ENCODE measurements at regions of chr4 and their contacts with region 1.

Region 1: GRCh38 chr4:127965062-127965802 is at the starts of genes ABHD18 and MFSD8:
- DNase-seq: peak; percentile 99
- H3K4me3 Mint-ChIP-seq: peak within 1 kb of the TSS; percentile 97
- H3K27ac Mint-ChIP-seq: peak within 1 kb of the TSS; percentile 94
- H3K4me1 Mint-ChIP-seq: peaks cover 5% of the 10 kb centered on the region
- H3K27me3 Mint-ChIP-seq: no peaks in the 10 kb centered on the region
- CTCF ChIP-seq: peak; percentile 51
- total RNA-seq, gene ABHD18: 10.7 and 12.1 TPM in 2 replicates
- total RNA-seq, gene MFSD8: 17.7 and 24.1 TPM in 2 replicates

Region 2: DNA sequence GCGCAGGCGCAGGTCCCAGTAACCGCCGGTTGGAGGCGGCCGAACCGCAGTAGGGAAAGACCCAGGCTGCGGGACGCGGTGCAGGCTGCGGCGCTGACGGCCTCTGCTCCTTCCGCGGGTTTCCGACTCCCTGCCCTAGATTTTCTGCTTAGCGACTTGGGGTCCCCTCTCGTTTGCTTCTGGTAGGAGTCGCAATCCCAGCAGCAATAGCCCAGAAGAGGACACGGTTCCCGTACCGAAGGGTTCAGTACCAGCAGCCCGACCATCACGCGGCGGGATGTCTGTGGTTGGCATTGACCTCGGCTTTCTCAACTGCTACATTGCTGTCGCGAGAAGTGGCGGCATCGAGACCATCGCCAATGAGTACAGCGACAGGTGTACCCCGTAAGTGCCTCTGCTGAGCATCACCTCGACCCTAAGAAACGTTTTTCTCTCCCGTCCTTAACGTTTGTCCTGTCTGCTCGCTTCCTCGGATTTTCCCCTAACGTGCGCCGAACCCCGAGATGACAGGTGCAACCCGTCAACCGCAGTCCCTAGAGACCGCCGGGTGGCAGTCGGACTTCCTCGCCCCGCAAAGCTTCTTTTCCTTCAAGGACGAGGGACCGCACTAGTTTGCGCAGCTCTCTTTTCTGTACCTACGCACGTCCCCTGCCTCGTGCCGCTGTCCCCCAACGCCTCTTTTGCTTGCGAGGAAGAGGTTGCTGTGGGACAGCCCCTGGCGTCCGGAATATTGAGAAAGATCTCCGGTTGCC is 182.8 kb before region 1 on chr4 and contains the start of gene HSPA4L:
- CTCF ChIA-PET with region 1: no interaction called
- POLR2A ChIA-PET with region 1: interaction called, 40 read pairs
- intact Hi-C with region 1: loop called (anchors 2 kb)
- DNase-seq: peak; percentile 78
- H3K4me3 Mint-ChIP-seq: peak within 1 kb of the TSS; percentile 82
- H3K27ac Mint-ChIP-seq: peak within 1 kb of the TSS; percentile 96
- H3K4me1 Mint-ChIP-seq: peaks cover 7% of the 10 kb centered on the region
- H3K27me3 Mint-ChIP-seq: no peaks in the 10 kb centered on the region
- CTCF ChIP-seq: peak; percentile 10
- total RNA-seq, gene HSPA4L: 45.9 and 68.9 TPM in 2 replicates

Region 3: DNA sequence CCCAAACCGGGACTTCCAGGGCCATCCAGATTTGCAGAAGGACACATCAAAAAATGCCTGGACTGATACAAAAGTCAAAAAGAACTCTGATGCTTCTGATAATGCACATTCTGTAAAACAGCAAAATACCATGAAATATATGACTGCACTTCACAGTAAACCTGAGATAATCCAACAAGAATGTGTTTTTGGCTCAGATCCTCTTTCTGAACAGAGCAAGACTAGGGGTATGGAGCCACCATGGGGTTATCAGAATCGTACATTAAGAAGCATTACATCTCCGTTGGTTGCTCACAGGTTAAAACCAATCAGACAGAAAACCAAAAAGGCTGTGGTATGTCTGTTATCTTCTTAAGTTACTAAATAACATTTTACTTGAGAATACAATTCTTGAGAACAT is 75.3 kb before region 1 on chr4:
- CTCF ChIA-PET with region 1: interaction called, 9 read pairs
- POLR2A ChIA-PET with region 1: interaction called, 75 read pairs
- intact Hi-C with region 1: no loop called
- DNase-seq: no peak
- H3K4me3 Mint-ChIP-seq: no peak overlapping the region
- H3K27ac Mint-ChIP-seq: peak overlapping the region; percentile 35
- H3K4me1 Mint-ChIP-seq: peaks cover 21% of the 10 kb centered on the region
- H3K27me3 Mint-ChIP-seq: no peaks in the 10 kb centered on the region
- CTCF ChIP-seq: no peak

Region 4: DNA sequence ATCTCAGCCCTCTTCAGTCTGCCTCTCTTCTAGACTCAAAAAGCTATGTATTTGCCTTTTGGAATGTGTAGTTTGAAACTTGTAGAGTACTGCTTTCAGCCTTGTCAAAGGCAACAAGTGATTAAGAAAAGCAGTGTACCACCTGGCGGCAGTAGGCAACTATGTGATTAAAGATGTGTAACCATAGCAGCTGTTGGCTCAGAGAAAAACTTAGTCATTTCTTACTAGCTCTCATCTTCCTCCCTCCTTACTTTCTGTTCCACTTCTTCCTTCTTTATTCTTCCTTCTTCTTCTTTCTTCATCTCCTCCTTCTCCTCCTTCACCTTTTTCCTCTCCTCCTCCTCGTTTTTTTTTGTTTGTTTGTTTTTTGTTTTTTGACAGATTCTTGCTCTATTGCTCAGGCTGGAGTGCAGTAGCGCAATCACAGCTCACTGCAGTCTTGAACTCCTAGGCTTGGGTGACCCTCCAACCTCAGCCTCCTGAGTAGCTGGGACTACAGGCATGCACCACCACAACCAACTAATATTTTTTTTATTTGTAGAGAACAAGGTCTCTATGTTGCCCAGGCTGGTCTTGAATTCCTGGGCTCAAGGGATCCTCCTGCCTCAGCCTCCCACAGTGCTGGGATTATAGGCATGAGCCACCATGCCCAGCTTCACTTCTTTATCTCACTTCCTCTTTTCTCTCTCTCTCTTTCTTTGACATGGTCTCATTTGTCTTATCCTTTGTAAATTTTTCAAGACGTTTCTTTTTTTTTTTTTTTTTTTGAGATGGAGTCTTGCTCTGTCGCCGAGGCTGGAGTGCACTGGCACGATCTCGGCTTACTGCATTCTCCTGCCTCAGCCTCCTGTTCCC is 32.5 kb after region 1 on chr4:
- CTCF ChIA-PET with region 1: interaction called, 7 read pairs
- POLR2A ChIA-PET with region 1: interaction called, 14 read pairs
- intact Hi-C with region 1: loop called (anchors 2 kb)
- DNase-seq: peak; percentile 76
- H3K4me3 Mint-ChIP-seq: no peak overlapping the region
- H3K27ac Mint-ChIP-seq: peak overlapping the region; percentile 8
- H3K4me1 Mint-ChIP-seq: peaks cover 12% of the 10 kb centered on the region
- H3K27me3 Mint-ChIP-seq: no peaks in the 10 kb centered on the region
- CTCF ChIP-seq: peak; percentile 26

Region 5: DNA sequence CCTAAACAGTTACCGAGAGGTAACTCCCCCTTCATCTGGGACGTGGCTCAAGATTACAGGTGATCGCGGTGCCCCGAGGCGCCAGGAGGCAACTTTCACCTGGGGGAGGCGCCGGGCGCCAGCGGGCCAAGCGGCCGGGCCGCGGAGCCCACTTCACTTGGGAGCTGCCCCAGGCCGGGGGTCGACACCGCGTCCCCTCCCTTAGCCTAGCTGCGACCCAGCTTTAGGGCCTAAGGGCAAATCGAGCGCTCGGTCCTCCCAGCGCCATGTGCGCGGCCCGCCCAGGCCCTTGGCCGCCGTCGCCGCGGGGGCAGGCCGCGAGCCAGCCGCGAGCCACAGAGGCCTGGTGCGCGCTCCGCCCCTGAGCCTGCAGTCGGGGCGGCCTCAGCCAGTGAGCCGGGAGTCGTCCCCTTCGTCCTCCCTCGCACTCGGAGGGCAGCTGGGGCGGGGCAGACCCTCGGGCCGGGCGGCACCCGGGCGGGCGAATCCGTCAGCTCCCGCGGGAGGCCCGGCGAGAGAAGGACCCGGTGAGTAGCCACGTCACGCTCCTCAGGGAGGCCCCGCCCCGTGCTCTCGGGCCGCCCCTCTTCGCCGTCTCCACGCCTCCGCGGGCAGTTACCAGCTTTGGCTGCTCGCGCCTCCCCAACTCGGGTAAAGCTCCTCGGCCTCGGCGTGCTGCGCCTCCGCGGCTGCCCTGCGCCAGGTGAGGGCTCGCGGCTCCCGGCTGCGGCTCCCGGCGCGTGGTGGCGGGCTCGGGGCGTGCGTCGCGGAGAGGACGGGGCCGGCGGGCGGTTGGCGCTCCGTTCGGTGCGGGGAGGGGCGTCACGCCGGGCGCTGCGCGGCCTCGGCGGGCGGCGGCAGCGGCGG is 95.7 kb after region 1 on chr4 and contains the start of gene LARP1B:
- CTCF ChIA-PET with region 1: interaction called, 3 read pairs
- POLR2A ChIA-PET with region 1: interaction called, 89 read pairs
- intact Hi-C with region 1: no loop called
- DNase-seq: peak; percentile 97
- H3K4me3 Mint-ChIP-seq: peak within 1 kb of the TSS; percentile 91
- H3K27ac Mint-ChIP-seq: peak within 1 kb of the TSS; percentile 96
- H3K4me1 Mint-ChIP-seq: peaks cover 6% of the 10 kb centered on the region
- H3K27me3 Mint-ChIP-seq: no peaks in the 10 kb centered on the region
- CTCF ChIP-seq: no peak
- total RNA-seq, gene LARP1B: 56.1 and 62.8 TPM in 2 replicates